Activated T-helper 2 cell treated with anti-CD3 and anti-CD28 coated beads, Interferon-gamma antibody, Interleukin-2, Interleukin-4, amounts not matched to agents 10 μg/mL and 5 μg/mL and 100 μg/mL, durations not matched to agents 14 hours and 24 hours and 36 hours (primary cell): ENCODE measurements at regions of chrX and their contacts with region 1.

Region 1: GRCh38 chrX:135596495-135596894 is 76.0 kb downstream of the INTS6L start:
- DNase-seq: peak; percentile 14
- H3K4me3 Mint-ChIP-seq: no peak overlapping the region
- H3K27ac Mint-ChIP-seq: no peak overlapping the region
- H3K4me1 Mint-ChIP-seq: peaks cover 3% of the 10 kb centered on the region
- H3K27me3 Mint-ChIP-seq: peaks cover 18% of the 10 kb centered on the region

Region 2: GRCh38 chrX:135484641-135485289 is 111.7 kb before region 1 on chrX:
- intact Hi-C with region 1: loop called (anchors 1 kb)
- DNase-seq: no peak
- H3K4me3 Mint-ChIP-seq: no peak overlapping the region
- H3K27ac Mint-ChIP-seq: no peak overlapping the region
- H3K4me1 Mint-ChIP-seq: no peaks in the 10 kb centered on the region
- H3K27me3 Mint-ChIP-seq: peaks cover 1% of the 10 kb centered on the region